H1 (cell line): ENCODE measurements at regions of chr2 and their contacts with region 1.

Region 1: GRCh38 chr2:219642465-219643080 is 15.1 kb downstream of the SLC4A3 start:
- DNase-seq: peak; percentile 95 to 96
- H3K4me3 ChIP-seq: peak overlapping the region in 1 of 4 experiments; percentile 13; a peak in 1 of 8 replicates
- H3K27ac ChIP-seq: no peak overlapping the region
- H3K4me1 ChIP-seq: peaks cover 0 to 6% (median 2%) of the 10 kb centered on the region in 4 experiments; a peak in 5 of 7 replicates
- H3K27me3 ChIP-seq: peaks cover 0 to 6% (median 3%) of the 10 kb centered on the region in 4 experiments; a peak in 5 of 7 replicates
- CTCF ChIP-seq: peak in 2 of 3 experiments; percentile 100; a peak in 3 of 4 replicates
- EP300 ChIP-seq: peak in 1 of 2 experiments; percentile 23; a peak in 1 of 3 replicates
- POLR2A ChIP-seq: 0 out of 3 replicates have a peak, but pooled peaks of 1 of the 2 experiments have one; percentile 17
- RAD21 ChIP-seq: peak; percentile 95 to 96

Region 2: GRCh38 chr2:219386532-219387280 is 255.9 kb before region 1 on chr2:
- CTCF ChIA-PET with region 1: no interaction called
- POLR2A ChIA-PET with region 1: no interaction called
- DNase-seq: no peak
- H3K4me3 ChIP-seq: peak overlapping the region; percentile 82 to 99 (median 84)
- H3K27ac ChIP-seq: no peak overlapping the region
- H3K4me1 ChIP-seq: peaks cover 0 to 14% (median 4%) of the 10 kb centered on the region in 4 experiments; a peak in 5 of 7 replicates
- H3K27me3 ChIP-seq: no peaks in the 10 kb centered on the region; a peak in 1 of 7 replicates
- CTCF ChIP-seq: no peak
- EP300 ChIP-seq: no peak
- POLR2A ChIP-seq: no peak
- RAD21 ChIP-seq: no peak

Region 3: GRCh38 chr2:219537657-219538488 is 104.7 kb before region 1 on chr2:
- CTCF ChIA-PET with region 1: interaction called, 48 read pairs
- POLR2A ChIA-PET with region 1: interaction called, 4 read pairs
- DNase-seq: no peak
- H3K4me3 ChIP-seq: no peak overlapping the region
- H3K27ac ChIP-seq: no peak overlapping the region
- H3K4me1 ChIP-seq: peaks cover 5 to 25% (median 16%) of the 10 kb centered on the region in 4 experiments
- H3K27me3 ChIP-seq: no peaks in the 10 kb centered on the region; a peak in 1 of 7 replicates
- CTCF ChIP-seq: peak in 1 of 3 experiments; percentile 25; a peak in 1 of 4 replicates
- EP300 ChIP-seq: no peak
- POLR2A ChIP-seq: no peak
- RAD21 ChIP-seq: peak in 1 of 2 experiments; percentile 26; a peak in 1 of 4 replicates

Region 4: DNA sequence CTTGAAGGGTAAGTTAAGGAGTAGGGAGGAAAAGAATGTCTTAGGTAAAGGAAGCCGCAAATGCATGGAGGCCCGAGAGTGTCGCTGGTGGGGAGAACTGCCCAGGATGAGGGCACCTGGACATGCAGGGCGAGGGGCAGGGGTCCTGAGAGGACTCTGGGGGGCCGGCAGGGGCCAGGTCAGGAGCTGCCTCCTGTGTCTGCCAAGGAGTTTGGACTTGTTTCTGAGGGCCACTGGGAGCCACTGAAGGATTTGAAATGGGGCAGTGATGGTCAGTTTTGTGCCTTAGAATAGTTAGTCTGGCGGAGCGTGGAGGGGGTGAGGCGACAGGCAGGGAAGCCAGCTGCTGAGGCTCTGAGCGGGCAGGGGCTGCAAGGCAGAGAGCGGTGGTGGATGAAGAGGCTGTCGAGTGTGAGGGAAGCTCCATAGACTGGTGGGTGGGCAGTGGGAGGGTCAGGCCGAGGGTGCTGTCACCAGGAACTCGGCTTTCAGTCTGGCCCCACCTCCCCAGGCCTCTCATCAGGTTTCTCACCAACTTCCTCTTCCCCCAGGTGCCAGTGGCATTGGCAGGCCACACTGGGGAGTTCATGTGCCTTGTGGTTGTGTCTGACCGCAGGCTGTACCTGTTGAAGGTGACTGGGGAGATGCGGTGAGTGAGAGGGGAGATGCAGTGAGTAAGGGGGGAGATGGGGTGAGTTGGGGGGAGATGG is 29.8 kb before region 1 on chr2:
- CTCF ChIA-PET with region 1: interaction called, 356 read pairs
- POLR2A ChIA-PET with region 1: no interaction called
- DNase-seq: no peak
- H3K4me3 ChIP-seq: no peak overlapping the region
- H3K27ac ChIP-seq: no peak overlapping the region
- H3K4me1 ChIP-seq: no peaks in the 10 kb centered on the region; a peak in 1 of 7 replicates
- H3K27me3 ChIP-seq: no peaks in the 10 kb centered on the region
- CTCF ChIP-seq: no peak
- EP300 ChIP-seq: no peak
- POLR2A ChIP-seq: no peak
- RAD21 ChIP-seq: no peak

Region 5: GRCh38 chr2:219627103-219628100 is 15.2 kb before region 1 on chr2 and contains the start of gene SLC4A3:
- CTCF ChIA-PET with region 1: interaction called, 356 read pairs
- POLR2A ChIA-PET with region 1: interaction called, 7 read pairs
- DNase-seq: peak in 1 of 2 experiments; percentile 65
- H3K4me3 ChIP-seq: peak within 1 kb of the TSS; percentile 31 to 85 (median 58)
- H3K27ac ChIP-seq: no peak within 1 kb of the TSS
- H3K4me1 ChIP-seq: peaks cover 0 to 12% (median 9%) of the 10 kb centered on the region in 4 experiments; a peak in 5 of 7 replicates
- H3K27me3 ChIP-seq: peaks cover 0 to 11% (median 6%) of the 10 kb centered on the region in 4 experiments; a peak in 5 of 7 replicates
- CTCF ChIP-seq: peak in 1 of 3 experiments; percentile 19; a peak in 1 of 4 replicates
- EP300 ChIP-seq: no peak
- POLR2A ChIP-seq: 0 out of 3 replicates have a peak, but pooled peaks of 1 of the 2 experiments have one; percentile 48
- RAD21 ChIP-seq: peak; percentile 5 to 10; a peak in 1 of 4 replicates
- total RNA-seq, gene SLC4A3: 6.5 and 7.4 TPM in 2 replicates

Region 6: DNA sequence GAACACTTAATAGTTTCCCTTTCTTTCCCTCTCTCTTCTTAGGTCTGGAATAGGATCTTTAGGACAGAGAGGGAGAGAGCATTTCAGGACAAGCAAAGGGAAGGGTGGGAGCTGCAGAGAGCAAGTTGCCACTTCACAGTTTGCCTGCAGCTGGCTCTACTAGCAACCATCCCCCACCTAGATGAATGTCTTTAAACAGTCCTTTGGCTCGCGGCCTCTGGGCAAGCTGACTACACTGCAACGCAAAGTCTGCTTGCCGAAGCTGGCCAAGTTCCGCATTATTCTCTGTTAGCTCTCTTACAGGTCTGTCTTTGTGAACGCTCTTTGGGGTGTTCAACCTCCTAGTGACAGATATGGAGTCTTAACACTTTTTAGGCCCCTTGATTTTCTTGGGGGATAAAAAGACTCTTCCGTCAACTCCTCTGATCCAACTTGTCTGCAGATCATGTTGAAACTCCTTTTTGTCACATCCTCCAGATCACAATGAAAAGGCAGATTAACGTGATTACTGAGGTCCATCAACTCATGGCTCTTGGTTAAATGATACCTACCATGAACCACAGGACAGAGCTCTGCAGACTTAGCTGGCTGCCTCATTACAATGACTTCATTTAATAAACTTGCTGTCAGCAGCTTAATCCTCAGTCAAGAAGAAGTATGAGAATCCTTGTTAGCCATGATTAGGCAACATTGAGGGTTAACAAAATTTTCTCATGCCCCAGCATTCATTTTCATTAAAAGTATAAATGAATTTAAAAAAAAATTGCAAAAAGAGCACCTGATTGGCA is 59.5 kb after region 1 on chr2:
- CTCF ChIA-PET with region 1: interaction called, 14 read pairs
- POLR2A ChIA-PET with region 1: interaction called, 3 read pairs
- DNase-seq: peak in 1 of 2 experiments; percentile 10
- H3K4me3 ChIP-seq: no peak overlapping the region
- H3K27ac ChIP-seq: no peak overlapping the region
- H3K4me1 ChIP-seq: peaks cover 0 to 15% (median 7%) of the 10 kb centered on the region in 4 experiments; a peak in 5 of 7 replicates
- H3K27me3 ChIP-seq: 0 out of 7 replicates have a peak, but pooled peaks cover 0 to 2% (median 0%) of the 10 kb centered on the region in 4 experiments
- CTCF ChIP-seq: no peak
- EP300 ChIP-seq: no peak
- POLR2A ChIP-seq: no peak
- RAD21 ChIP-seq: no peak

Region 7: DNA sequence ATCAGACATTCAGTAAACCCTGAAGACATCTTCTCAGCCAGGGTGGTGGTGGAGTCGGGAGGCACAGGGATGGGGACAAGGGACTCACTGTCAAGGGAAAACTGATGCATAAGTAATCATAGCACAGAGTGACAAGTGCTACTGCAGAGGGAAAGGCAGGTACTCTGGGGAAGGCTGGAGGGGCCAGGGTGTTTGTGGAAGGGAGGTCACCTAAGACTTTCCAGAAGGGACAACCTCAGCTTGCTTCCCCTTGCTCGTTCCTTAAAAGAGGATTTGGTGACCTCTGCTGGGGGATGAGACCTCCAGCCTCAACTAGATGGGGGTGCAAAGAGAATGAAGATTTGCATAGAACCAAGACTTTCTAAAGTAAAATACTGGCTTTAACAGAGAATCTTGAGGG is 84.3 kb after region 1 on chr2:
- CTCF ChIA-PET with region 1: interaction called, 63 read pairs
- POLR2A ChIA-PET with region 1: no interaction called
- DNase-seq: no peak
- H3K4me3 ChIP-seq: no peak overlapping the region
- H3K27ac ChIP-seq: no peak overlapping the region
- H3K4me1 ChIP-seq: peaks cover 0 to 4% (median 1%) of the 10 kb centered on the region in 4 experiments; a peak in 2 of 7 replicates
- H3K27me3 ChIP-seq: no peaks in the 10 kb centered on the region
- CTCF ChIP-seq: peak; percentile 23 to 62 (median 53); a peak in 3 of 4 replicates
- EP300 ChIP-seq: no peak
- POLR2A ChIP-seq: no peak
- RAD21 ChIP-seq: peak; percentile 78 to 82

Region 8: DNA sequence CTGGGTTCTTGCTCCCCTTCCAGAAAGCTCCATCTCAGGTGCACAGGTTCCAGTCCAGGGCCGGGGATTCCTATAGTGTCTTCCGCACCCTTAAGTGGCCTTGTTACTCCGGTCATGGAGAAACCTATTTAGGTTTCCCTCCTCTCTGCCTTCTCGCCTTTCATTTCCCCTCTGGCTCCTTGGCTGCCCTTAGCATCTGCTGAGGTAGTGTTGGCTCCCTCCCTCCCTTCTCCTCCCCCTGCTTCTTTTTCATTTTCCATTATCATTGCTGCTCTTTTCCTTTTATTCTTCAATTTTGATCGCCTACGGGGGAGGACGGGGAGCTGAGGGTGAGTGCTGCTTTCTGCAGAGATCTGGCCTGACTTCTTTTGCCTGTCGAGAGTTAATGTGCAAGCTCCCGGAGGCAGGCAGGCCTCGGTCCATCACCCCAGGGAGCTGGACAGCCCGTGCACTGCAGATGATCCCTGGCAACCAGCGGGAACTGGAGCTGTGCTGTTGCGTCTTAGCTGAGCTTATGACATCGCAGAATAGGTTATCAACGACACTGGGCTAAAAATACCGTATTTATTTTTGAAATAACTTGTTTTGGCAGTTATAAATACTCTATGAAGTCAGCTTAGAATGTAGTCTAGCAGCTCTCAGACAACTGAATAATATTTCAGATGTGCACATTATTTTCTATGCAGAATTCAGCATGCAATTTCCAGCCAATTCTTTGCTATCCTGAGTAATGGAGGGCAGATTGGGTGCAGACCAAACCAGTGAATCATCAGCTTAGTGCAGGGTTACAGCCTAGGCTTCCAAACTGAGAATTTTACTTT is 126.7 kb after region 1 on chr2:
- CTCF ChIA-PET with region 1: no interaction called
- POLR2A ChIA-PET with region 1: no interaction called
- DNase-seq: no peak
- H3K4me3 ChIP-seq: no peak overlapping the region
- H3K27ac ChIP-seq: no peak overlapping the region
- H3K4me1 ChIP-seq: no peaks in the 10 kb centered on the region
- H3K27me3 ChIP-seq: no peaks in the 10 kb centered on the region
- CTCF ChIP-seq: no peak
- EP300 ChIP-seq: no peak
- POLR2A ChIP-seq: no peak
- RAD21 ChIP-seq: no peak

Region 9: GRCh38 chr2:220154304-220154703 is 511.7 kb after region 1 on chr2:
- CTCF ChIA-PET with region 1: no interaction called
- POLR2A ChIA-PET with region 1: no interaction called
- DNase-seq: no peak
- H3K4me3 ChIP-seq: no peak overlapping the region
- H3K27ac ChIP-seq: no peak overlapping the region
- H3K4me1 ChIP-seq: no peaks in the 10 kb centered on the region
- H3K27me3 ChIP-seq: no peaks in the 10 kb centered on the region
- CTCF ChIP-seq: peak in 1 of 3 experiments; percentile 19; a peak in 1 of 4 replicates
- EP300 ChIP-seq: no peak
- POLR2A ChIP-seq: no peak
- RAD21 ChIP-seq: 0 out of 4 replicates have a peak, but pooled peaks of 1 of the 2 experiments have one; percentile 5